ENCODE measurements at regions of chr5 and their contacts with region 1.

Region 1: DNA sequence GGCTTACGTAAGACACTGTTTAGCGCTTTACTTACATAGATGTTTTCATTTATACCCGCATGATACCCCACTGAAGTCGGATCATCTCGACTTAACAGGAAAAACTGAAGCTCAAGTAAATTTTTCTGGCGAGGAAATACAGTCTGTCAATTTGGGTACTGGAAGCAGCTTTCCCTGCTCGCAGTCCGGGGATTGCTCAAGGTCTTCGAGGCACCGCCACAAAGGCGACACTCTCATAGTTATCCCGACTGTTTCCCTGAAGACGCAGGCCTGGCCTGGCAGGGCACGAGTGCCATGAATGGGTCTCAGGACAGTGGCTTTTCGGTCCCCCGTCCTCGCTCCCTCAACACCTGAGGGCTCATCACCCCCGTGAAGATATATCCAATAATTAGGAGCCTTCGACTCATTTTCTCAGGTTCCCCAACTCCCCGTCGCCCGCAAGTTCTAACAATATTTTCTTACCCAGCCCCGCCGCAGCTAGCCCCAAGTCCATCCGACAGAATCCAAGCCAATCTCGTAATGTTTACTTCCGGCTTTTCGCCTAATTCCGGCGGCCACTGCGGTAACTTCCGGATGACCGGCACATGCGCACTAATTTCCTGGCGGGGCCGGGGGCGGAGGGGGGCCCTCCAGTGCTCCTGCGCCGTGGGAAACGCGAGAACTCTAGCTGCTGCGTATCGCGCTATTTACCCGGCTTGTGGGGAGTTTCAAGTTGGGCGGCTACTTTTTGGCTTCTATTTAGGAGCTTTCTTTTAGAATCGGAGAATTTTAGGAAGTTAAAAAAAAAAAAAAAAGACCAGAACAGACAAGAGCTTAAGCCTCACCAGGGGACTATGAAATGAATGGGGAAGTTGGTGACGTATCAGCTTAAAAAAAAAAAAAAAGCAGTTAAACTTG is at the start of gene SLU7:
- DNase-seq: peak; percentile 92 to 95
- H3K4me3 ChIP-seq: peak within 1 kb of the TSS; percentile 80 to 90 (median 84)
- H3K27ac ChIP-seq: peak within 1 kb of the TSS; percentile 95 to 96
- H3K4me1 ChIP-seq: no peaks in the 10 kb centered on the region
- H3K27me3 ChIP-seq: no peaks in the 10 kb centered on the region
- CTCF ChIP-seq: no peak
- POLR2A ChIP-seq: peak; percentile 84
- total RNA-seq, gene SLU7: 77.0 to 88.3 (median 86.3) TPM

Region 2: GRCh38 chr5:160442824-160443431 is 24.1 kb after region 1 on chr5:
- intact Hi-C with region 1: loop called (anchors 1 kb)
- DNase-seq: peak in 1 of 2 donors; percentile 49
- H3K4me3 ChIP-seq: no peak overlapping the region
- H3K27ac ChIP-seq: peak overlapping the region; percentile 21 to 67
- H3K4me1 ChIP-seq: no peaks in the 10 kb centered on the region
- H3K27me3 ChIP-seq: no peaks in the 10 kb centered on the region
- CTCF ChIP-seq: no peak
- POLR2A ChIP-seq: no peak

Measured in breast epithelium (tissue), 4 donors.